Activated T-helper 1 cell treated with anti-CD3 and anti-CD28 coated beads, Interleukin-12 subunit alpha, Interleukin-12 subunit beta, Interleukin-2, Interleukin-4 antibody, amounts not matched to agents 30 ng/mL and 10 ng/mL and 1 ng/mL, durations not matched to agents 14 hours and 24 hours and 36 hours (primary cell): ENCODE measurements at regions of chr7 and their contacts with region 1.

Region 1: DNA sequence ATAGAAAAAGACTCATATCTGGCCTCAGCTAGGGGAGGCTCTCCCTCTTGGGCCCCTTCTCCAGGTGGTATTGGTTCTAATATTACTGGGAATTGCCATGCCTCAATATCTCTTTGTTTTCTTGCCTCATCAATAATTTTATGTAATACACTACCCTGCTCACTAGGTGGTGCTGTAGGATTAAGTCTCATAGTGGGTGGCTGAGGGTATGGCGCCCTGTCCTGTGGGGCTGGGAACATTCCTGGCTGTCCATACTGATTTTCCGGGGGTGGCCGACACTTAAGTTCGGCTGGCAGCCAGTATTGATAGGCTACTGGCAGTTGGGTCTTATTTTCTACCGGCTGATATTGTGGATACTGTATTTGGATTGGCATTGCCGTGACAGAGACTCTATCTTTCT is 9.0 kb upstream of the TAS2R3 start:
- DNase-seq: no peak
- H3K4me3 Mint-ChIP-seq: no peak overlapping the region
- H3K27ac Mint-ChIP-seq: no peak overlapping the region
- H3K4me1 Mint-ChIP-seq: peaks cover 10% of the 10 kb centered on the region
- H3K27me3 Mint-ChIP-seq: no peaks in the 10 kb centered on the region

Region 2: GRCh38 chr7:141785706-141786552 is 31.0 kb after region 1 on chr7:
- intact Hi-C with region 1: loop called (anchors 1 kb)
- DNase-seq: no peak
- H3K4me3 Mint-ChIP-seq: no peak overlapping the region
- H3K27ac Mint-ChIP-seq: no peak overlapping the region
- H3K4me1 Mint-ChIP-seq: no peaks in the 10 kb centered on the region
- H3K27me3 Mint-ChIP-seq: no peaks in the 10 kb centered on the region

Region 3: GRCh38 chr7:141884539-141885225 is 129.7 kb after region 1 on chr7:
- intact Hi-C with region 1: no loop called
- DNase-seq: no peak
- H3K4me3 Mint-ChIP-seq: no peak overlapping the region
- H3K27ac Mint-ChIP-seq: no peak overlapping the region
- H3K4me1 Mint-ChIP-seq: no peaks in the 10 kb centered on the region
- H3K27me3 Mint-ChIP-seq: no peaks in the 10 kb centered on the region